Psoas muscle (tissue), 8 donors: ENCODE measurements at regions of chr19 and their contacts with region 1.

Region 1: GRCh38 chr19:31349160-31349881 is at the start of gene TSHZ3:
- DNase-seq: peak; percentile 81 to 85
- ATAC-seq: peak; percentile 51 to 68 (median 62)
- H3K4me3 ChIP-seq: peak within 1 kb of the TSS; percentile 80
- H3K27ac ChIP-seq: peak within 1 kb of the TSS; percentile 74
- H3K4me1 ChIP-seq: peaks cover 9% of the 10 kb centered on the region
- H3K27me3 ChIP-seq: peaks cover 0 to 63% (median 32%) of the 10 kb centered on the region in 3 donors
- CTCF ChIP-seq: no peak
- total RNA-seq, gene TSHZ3: 1.1 to 2.4 (median 2.3) TPM

Region 2: DNA sequence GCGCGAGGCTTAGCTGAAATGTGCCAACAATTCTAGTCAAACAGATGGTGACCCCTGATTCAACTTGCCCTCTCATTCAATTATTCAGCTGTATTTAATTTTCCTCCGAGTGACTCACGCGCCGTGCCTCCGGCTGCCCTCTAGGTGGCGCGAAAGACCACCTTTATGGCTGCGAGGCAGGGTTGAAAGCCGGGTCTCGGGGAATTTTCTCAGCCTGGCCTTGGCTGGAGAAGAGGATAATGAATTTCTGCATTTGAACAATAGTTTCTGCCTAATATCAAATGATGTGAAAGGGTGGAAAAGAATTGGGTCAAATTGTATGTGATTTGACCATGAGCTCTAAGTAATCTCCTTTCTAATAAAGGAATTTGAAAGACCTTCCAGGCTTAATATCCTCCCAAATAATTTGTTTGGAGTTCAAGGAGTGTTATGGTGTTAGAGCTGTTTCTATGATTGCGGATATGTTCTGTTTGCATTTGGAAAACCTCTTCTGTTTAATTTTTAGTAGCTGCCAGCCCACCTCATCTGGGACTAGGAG is 666.3 kb before region 1 on chr19:
- intact Hi-C with region 1: loop called in 1 of 2 experiments (anchors 10 kb)
- DNase-seq: peak; percentile 71 to 82
- ATAC-seq: peak; percentile 63 to 82 (median 80)
- H3K4me3 ChIP-seq: no peak overlapping the region
- H3K27ac ChIP-seq: no peak overlapping the region
- H3K4me1 ChIP-seq: no peaks in the 10 kb centered on the region
- H3K27me3 ChIP-seq: peaks cover 0 to 23% (median 3%) of the 10 kb centered on the region in 3 donors
- CTCF ChIP-seq: peak; percentile 89

Region 3: DNA sequence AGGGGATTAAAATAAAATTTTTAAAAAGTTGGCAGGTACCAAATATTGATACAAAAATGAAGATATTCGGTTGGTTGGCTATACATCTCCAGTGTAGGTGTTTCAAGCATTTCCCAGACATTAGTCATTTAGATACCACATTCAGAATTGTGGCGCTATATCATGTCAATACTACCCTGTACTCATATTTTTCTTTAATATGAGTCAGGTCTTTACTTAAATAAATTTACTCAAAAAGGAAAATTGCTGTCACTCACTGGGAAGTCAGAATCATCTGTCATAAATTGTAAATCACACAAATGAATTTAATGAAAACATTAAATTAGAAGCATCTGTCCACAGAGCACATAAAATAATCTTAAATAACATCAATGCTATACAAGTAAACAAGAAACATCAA is 134.3 kb before region 1 on chr19:
- intact Hi-C with region 1: loop called in 1 of 2 experiments (anchors 5 kb)
- DNase-seq: no peak
- ATAC-seq: no peak
- H3K4me3 ChIP-seq: no peak overlapping the region
- H3K27ac ChIP-seq: no peak overlapping the region
- H3K4me1 ChIP-seq: no peaks in the 10 kb centered on the region
- H3K27me3 ChIP-seq: no peaks in the 10 kb centered on the region
- CTCF ChIP-seq: no peak